ENCODE measurements at regions of chr13 and their contacts with region 1.

Region 1: GRCh38 chr13:33542283-33543088 is 256.9 kb upstream of the STARD13 start:
- DNase-seq: peak; percentile 98
- H3K4me3 Mint-ChIP-seq: peak overlapping the region; percentile 79
- H3K27ac Mint-ChIP-seq: peak overlapping the region; percentile 99
- H3K4me1 Mint-ChIP-seq: peaks cover 54% of the 10 kb centered on the region
- H3K27me3 Mint-ChIP-seq: no peaks in the 10 kb centered on the region

Region 2: GRCh38 chr13:32031025-32031814 is 1511.3 kb before region 1 on chr13 and contains the start of gene FRY:
- CTCF ChIA-PET with region 1: no interaction called
- intact Hi-C with region 1: loop called (anchors 5 kb)
- DNase-seq: peak; percentile 72
- H3K4me3 Mint-ChIP-seq: peak within 1 kb of the TSS; percentile 85
- H3K27ac Mint-ChIP-seq: peak within 1 kb of the TSS; percentile 68
- H3K4me1 Mint-ChIP-seq: peaks cover 45% of the 10 kb centered on the region
- H3K27me3 Mint-ChIP-seq: peaks cover 9% of the 10 kb centered on the region
- total RNA-seq, gene FRY: 7.3 to 7.8 TPM

Region 3: DNA sequence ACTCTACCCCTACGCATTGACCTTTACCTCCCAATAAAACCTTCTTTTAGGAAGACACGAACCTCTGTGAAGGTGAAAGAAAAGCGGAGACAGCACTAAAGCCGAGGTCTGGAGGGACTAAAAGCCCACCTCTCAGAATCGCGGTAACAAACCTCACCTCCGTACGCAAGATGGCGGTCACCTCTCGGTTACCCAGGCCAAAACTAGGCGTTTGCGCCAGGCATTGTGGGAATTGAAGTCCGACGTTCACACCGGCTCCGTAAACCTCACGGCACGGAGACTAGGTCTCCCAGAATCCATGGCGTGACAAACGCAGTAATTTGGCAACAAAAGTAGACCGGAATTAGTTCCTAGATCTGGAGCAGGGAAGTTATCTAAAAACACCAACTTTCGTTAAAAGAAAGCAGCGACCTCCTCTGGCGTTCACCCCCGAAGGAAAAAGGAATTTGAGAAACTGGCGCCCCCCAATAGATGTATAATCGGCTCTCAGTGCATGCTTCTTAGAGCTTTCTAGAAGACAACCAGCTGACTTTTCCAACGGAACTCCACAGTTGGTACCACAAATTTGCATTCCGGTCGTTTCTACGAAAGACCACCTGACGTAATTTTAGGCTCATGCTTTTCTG is 1003.8 kb before region 1 on chr13 and contains the start of gene N4BP2L2:
- CTCF ChIA-PET with region 1: no interaction called
- intact Hi-C with region 1: loop called (anchors 1 kb)
- DNase-seq: peak; percentile 96
- H3K4me3 Mint-ChIP-seq: peak within 1 kb of the TSS; percentile 97
- H3K27ac Mint-ChIP-seq: peak within 1 kb of the TSS; percentile 99
- H3K4me1 Mint-ChIP-seq: peaks cover 37% of the 10 kb centered on the region
- H3K27me3 Mint-ChIP-seq: no peaks in the 10 kb centered on the region
- total RNA-seq, gene N4BP2L2: 81.1 to 82.3 TPM

Region 4: DNA sequence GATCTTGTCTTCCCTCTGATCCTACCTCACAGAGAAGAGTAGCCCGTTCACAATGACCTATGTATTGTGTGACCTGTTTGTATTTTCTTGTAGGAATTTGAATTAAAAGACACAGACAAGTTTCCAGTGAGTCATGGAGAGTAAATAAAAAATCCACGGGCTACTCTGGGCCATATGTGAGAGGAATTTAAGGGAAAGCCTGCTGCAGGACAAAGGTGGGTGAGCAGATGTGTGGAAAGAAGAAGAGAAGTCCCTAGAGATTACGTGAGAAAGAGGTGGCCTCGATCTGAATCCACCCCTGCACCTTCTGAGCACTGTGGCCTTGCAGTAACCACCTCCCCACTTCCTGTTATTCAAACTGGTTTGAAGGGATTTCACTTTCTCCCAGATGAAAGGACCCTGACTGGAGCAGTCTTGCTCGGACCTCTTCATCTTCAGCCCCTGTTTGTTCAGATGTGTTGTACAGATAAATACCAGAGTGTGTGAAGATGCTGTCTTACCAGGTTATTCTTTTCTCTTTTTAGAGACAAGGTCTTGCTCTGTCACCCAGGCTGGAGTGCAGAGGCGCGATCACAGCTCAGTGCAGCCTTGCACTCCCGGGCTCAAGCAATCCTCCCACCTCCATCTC is 750.8 kb before region 1 on chr13:
- CTCF ChIA-PET with region 1: no interaction called
- intact Hi-C with region 1: loop called (anchors 10 kb)
- DNase-seq: peak; percentile 61
- H3K4me3 Mint-ChIP-seq: no peak overlapping the region
- H3K27ac Mint-ChIP-seq: peak overlapping the region; percentile 71
- H3K4me1 Mint-ChIP-seq: peaks cover 34% of the 10 kb centered on the region
- H3K27me3 Mint-ChIP-seq: no peaks in the 10 kb centered on the region

Region 5: GRCh38 chr13:33228648-33229445 is 313.6 kb before region 1 on chr13:
- CTCF ChIA-PET with region 1: interaction called, 9 read pairs
- intact Hi-C with region 1: loop called (anchors 1 kb)
- DNase-seq: peak; percentile 24
- H3K4me3 Mint-ChIP-seq: no peak overlapping the region
- H3K27ac Mint-ChIP-seq: no peak overlapping the region
- H3K4me1 Mint-ChIP-seq: peaks cover 8% of the 10 kb centered on the region
- H3K27me3 Mint-ChIP-seq: peaks cover 12% of the 10 kb centered on the region

Region 6: DNA sequence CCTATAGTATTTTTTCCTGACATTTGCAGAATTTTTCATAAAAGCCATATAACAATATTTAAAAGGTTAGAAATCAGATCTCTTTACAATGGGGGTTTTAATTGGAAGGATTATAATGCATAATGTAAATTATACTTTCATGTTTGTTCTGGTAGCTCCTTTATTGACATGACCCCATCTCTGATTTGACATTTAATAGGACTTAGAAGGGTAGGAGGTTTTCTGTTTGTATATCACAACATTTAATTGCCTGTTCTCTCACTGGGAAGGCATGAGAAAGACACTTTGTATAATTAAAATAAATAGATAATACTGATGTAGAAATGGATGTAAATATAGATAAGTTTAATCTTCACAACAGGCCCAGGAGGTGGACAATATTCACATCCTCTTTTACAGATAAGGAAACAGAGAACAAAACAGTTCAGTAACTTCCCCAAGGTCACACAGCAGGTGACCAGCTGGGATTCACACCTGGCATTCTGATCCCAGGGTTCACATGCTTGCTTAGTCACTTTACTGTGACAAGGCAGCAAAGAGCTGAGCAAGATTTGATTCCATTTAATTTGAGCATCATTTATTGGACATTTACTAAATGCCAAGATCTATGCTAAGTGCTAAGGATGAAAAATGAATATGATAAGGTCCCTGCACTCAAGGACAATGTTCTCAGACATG is 163.0 kb before region 1 on chr13:
- CTCF ChIA-PET with region 1: no interaction called
- intact Hi-C with region 1: no loop called
- DNase-seq: no peak
- H3K4me3 Mint-ChIP-seq: no peak overlapping the region
- H3K27ac Mint-ChIP-seq: no peak overlapping the region
- H3K4me1 Mint-ChIP-seq: no peaks in the 10 kb centered on the region
- H3K27me3 Mint-ChIP-seq: no peaks in the 10 kb centered on the region

Region 7: DNA sequence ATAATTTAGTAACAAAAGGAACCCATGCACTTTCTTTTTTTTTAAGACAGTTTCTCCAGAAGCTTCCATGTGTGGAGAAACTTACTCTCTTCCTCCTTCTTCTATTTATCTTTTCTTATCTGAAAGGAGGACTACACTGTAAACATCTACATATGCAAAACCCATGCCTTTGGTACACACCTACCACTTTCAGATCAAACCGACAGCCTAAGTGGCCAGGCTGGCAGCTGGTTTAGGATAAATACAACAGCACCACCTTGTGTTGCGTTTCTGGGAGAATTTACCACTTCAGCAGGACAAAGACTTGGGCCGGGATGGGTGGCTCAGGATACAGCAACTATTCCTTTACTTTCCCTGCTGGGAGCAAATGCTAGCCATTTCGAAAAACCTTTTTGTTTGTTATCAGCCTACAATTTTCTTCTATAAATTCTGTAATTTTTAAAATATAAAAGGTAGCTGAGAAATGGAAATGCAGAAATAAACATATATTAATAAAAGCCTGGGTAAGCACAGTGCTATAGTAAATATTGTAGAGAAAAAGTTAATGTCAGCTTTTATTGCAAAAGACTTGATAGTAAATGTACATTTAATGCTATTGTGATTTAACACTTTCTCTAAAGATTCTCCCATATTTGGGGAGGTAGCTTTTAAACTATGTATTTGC is 181.4 kb after region 1 on chr13:
- CTCF ChIA-PET with region 1: interaction called, 55 read pairs
- intact Hi-C with region 1: loop called (anchors 1 kb)
- DNase-seq: peak; percentile 82
- H3K4me3 Mint-ChIP-seq: no peak overlapping the region
- H3K27ac Mint-ChIP-seq: no peak overlapping the region
- H3K4me1 Mint-ChIP-seq: peaks cover 27% of the 10 kb centered on the region
- H3K27me3 Mint-ChIP-seq: no peaks in the 10 kb centered on the region

Region 8: DNA sequence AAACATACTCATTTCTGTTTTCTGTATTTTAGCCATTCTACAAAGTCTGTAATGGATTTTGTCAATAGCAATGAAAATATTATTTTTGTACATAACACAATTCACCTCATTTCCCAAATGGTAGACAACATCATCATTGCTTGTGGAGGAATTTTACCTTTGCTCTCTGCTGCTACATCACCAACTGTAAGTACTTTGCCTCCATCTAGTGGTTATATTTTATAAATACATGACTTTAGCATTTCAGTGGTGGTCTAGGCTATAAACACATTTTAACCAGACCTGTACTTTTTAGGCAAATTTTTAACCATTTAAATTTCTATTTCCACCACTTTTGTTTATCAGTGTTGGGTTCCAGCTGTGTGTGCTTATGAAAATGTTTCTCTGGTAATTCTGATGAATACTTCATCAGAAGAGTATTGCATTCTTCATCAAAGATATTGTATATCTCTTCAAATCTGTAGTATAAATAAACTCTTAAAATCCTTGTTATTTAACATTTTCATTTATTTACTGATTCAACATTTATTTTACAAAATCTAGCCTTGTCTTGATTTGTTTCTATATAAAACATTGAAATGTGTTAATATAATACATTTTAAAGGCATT is 1621.9 kb after region 1 on chr13:
- CTCF ChIA-PET with region 1: no interaction called
- intact Hi-C with region 1: loop called (anchors 2 kb)
- DNase-seq: no peak
- H3K4me3 Mint-ChIP-seq: no peak overlapping the region
- H3K27ac Mint-ChIP-seq: no peak overlapping the region
- H3K4me1 Mint-ChIP-seq: peaks cover 6% of the 10 kb centered on the region
- H3K27me3 Mint-ChIP-seq: no peaks in the 10 kb centered on the region

Measured in activated naive CD4-positive, alpha-beta T cell treated with anti-CD3 and anti-CD28 coated beads for 36 hours (primary cell).